ENCODE measurements at regions of chr11 and their contacts with region 1.

Region 1: DNA sequence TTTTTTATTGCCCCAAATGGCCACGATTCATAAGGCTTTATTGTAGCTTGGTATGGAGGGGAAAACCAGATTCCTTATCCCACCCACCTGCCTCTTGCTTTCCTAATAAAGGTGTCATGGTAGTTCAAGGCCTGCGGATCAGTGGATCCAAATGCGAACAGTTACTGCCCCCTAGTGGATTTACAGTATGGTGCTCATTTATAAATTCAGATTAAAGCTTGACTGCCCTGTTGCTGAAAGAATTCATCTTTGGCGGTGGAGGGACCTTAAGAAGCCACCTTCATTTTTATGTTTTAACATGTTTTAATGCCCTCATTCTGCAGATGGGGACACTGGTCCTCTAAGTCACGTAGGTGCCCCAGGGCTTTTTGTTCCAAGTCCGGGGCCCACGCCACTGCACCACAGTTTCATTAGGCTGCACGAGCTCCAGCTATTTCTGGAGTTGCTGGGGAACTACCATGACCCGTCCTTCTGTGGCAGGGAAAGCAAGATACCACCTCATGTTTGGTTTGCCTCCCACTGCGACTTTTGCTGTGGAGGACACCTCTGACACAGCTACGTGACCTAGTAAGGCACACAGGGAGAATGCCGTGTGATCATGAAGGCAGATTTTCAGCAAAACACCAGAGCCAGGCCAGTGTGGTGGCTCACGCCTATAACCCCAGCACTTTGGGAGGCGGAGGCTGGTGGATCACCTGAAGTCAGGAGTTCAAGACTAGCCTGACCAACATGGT is 15.6 kb upstream of the INCENP start:
- DNase-seq: peak; percentile 49
- ATAC-seq: peak; percentile 37
- H3K4me3 Mint-ChIP-seq: no peak overlapping the region
- H3K27ac Mint-ChIP-seq: no peak overlapping the region
- H3K4me1 Mint-ChIP-seq: peaks cover 16% of the 10 kb centered on the region
- H3K27me3 Mint-ChIP-seq: no peaks in the 10 kb centered on the region
- CTCF ChIP-seq: peak; percentile 78

Region 2: DNA sequence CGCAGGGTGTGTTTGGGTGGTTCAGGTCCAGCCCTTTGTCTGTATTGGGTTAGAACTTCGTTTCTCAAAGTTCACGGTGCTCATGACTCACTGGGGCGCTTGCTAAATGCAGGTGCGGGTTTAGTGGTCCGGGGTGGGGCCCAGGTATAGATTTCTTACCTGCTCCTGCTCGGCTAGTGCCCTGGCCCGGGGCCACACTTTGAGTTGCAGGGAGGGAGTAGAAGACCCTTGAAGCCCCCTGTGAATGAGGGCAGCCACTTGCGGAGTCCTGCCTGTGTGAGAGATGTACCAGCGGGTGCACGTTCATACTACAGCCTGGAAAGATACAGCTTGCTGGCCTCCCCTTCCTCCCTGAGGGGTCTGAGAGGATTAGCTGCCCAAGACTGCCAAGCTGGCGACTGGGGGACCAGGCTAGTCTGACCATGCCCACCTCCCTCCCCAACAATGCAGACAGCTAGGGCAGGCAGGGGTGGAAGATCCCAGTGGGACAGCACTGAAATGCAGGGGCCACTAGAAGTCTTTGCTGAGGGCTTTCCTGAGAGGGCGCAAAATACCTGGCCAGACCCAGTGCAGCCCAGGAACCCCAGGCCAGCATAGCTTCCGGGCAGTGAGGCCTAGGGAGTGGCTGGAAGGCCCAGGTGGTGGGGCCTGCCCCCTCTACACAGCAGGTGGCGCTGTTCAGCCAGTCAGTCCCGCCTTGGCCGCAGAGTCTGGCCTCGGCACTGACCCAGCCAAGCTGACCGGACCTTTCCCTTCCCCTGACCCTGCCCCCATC is 360.8 kb before region 1 on chr11:
- CTCF ChIA-PET with region 1: interaction called, 10 read pairs
- POLR2A ChIA-PET with region 1: no interaction called
- intact Hi-C with region 1: no loop called
- DNase-seq: peak; percentile 67
- ATAC-seq: peak; percentile 70
- H3K4me3 Mint-ChIP-seq: no peak overlapping the region
- H3K27ac Mint-ChIP-seq: no peak overlapping the region
- H3K4me1 Mint-ChIP-seq: peaks cover 2% of the 10 kb centered on the region
- H3K27me3 Mint-ChIP-seq: peaks cover 21% of the 10 kb centered on the region
- CTCF ChIP-seq: peak; percentile 97

Region 3: DNA sequence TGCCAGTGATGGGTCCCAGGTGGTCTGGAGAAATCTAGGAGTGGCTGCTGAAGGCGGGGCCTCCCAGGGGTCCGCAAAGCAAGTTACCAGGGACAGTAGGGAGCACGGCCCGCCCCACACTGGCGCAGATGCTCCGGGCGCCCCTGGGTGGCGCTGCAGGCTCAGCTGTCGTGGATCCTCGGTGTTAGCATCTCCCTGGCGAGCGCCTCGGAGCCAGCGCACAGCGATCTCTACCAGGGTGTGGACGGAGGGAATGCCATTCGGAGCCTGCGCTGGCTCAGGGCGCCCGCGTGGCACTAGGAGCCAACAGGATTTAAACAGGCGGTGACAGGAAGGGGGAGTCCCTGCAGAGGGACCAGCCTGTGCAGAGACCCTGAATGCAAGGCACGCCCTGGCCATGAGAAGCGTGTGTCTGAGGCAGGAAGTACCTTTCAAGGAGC is 237.0 kb before region 1 on chr11:
- CTCF ChIA-PET with region 1: interaction called, 37 read pairs
- POLR2A ChIA-PET with region 1: no interaction called
- intact Hi-C with region 1: no loop called
- DNase-seq: peak; percentile 80
- ATAC-seq: peak; percentile 97
- H3K4me3 Mint-ChIP-seq: peak overlapping the region; percentile 48
- H3K27ac Mint-ChIP-seq: no peak overlapping the region
- H3K4me1 Mint-ChIP-seq: peaks cover 2% of the 10 kb centered on the region
- H3K27me3 Mint-ChIP-seq: no peaks in the 10 kb centered on the region
- CTCF ChIP-seq: peak; percentile 95

Region 4: GRCh38 chr11:61899146-61899841 is 208.9 kb before region 1 on chr11:
- CTCF ChIA-PET with region 1: interaction called, 162 read pairs
- POLR2A ChIA-PET with region 1: no interaction called
- intact Hi-C with region 1: loop called (anchors 5 kb)
- DNase-seq: peak; percentile 95
- ATAC-seq: peak; percentile 95
- H3K4me3 Mint-ChIP-seq: no peak overlapping the region
- H3K27ac Mint-ChIP-seq: no peak overlapping the region
- H3K4me1 Mint-ChIP-seq: peaks cover 6% of the 10 kb centered on the region
- H3K27me3 Mint-ChIP-seq: no peaks in the 10 kb centered on the region
- CTCF ChIP-seq: peak; percentile 100

Region 5: GRCh38 chr11:61947486-61948210 is 160.5 kb before region 1 on chr11:
- CTCF ChIA-PET with region 1: interaction called, 53 read pairs
- POLR2A ChIA-PET with region 1: interaction called, 3 read pairs
- intact Hi-C with region 1: no loop called
- DNase-seq: peak; percentile 82
- ATAC-seq: peak; percentile 77
- H3K4me3 Mint-ChIP-seq: no peak overlapping the region
- H3K27ac Mint-ChIP-seq: no peak overlapping the region
- H3K4me1 Mint-ChIP-seq: peaks cover 7% of the 10 kb centered on the region
- H3K27me3 Mint-ChIP-seq: peaks cover 3% of the 10 kb centered on the region
- CTCF ChIP-seq: peak; percentile 80

Region 6: GRCh38 chr11:62088331-62088933 is 19.8 kb before region 1 on chr11:
- CTCF ChIA-PET with region 1: interaction called, 152 read pairs
- POLR2A ChIA-PET with region 1: no interaction called
- intact Hi-C with region 1: no loop called
- DNase-seq: no peak
- ATAC-seq: no peak
- H3K4me3 Mint-ChIP-seq: no peak overlapping the region
- H3K27ac Mint-ChIP-seq: no peak overlapping the region
- H3K4me1 Mint-ChIP-seq: no peaks in the 10 kb centered on the region
- H3K27me3 Mint-ChIP-seq: peaks cover 1% of the 10 kb centered on the region
- CTCF ChIP-seq: no peak

Region 7: GRCh38 chr11:62132188-62132587 is 24.0 kb after region 1 on chr11:
- CTCF ChIA-PET with region 1: interaction called, 13 read pairs
- POLR2A ChIA-PET with region 1: no interaction called
- intact Hi-C with region 1: no loop called
- DNase-seq: no peak
- ATAC-seq: no peak
- H3K4me3 Mint-ChIP-seq: no peak overlapping the region
- H3K27ac Mint-ChIP-seq: no peak overlapping the region
- H3K4me1 Mint-ChIP-seq: peaks cover 19% of the 10 kb centered on the region
- H3K27me3 Mint-ChIP-seq: no peaks in the 10 kb centered on the region
- CTCF ChIP-seq: no peak

Region 8: GRCh38 chr11:62157603-62158002 is 49.4 kb after region 1 on chr11:
- CTCF ChIA-PET with region 1: no interaction called
- POLR2A ChIA-PET with region 1: no interaction called
- intact Hi-C with region 1: no loop called
- DNase-seq: no peak
- ATAC-seq: no peak
- H3K4me3 Mint-ChIP-seq: no peak overlapping the region
- H3K27ac Mint-ChIP-seq: no peak overlapping the region
- H3K4me1 Mint-ChIP-seq: no peaks in the 10 kb centered on the region
- H3K27me3 Mint-ChIP-seq: peaks cover 18% of the 10 kb centered on the region
- CTCF ChIP-seq: no peak

Region 9: GRCh38 chr11:62186195-62186594 is 78.0 kb after region 1 on chr11:
- CTCF ChIA-PET with region 1: no interaction called
- POLR2A ChIA-PET with region 1: no interaction called
- intact Hi-C with region 1: no loop called
- DNase-seq: no peak
- ATAC-seq: no peak
- H3K4me3 Mint-ChIP-seq: no peak overlapping the region
- H3K27ac Mint-ChIP-seq: no peak overlapping the region
- H3K4me1 Mint-ChIP-seq: no peaks in the 10 kb centered on the region
- H3K27me3 Mint-ChIP-seq: peaks cover 27% of the 10 kb centered on the region
- CTCF ChIP-seq: no peak